Caco-2 (cell line): ENCODE measurements at regions of chr12 and their contacts with region 1.

Region 1: GRCh38 chr12:106774005-106774807 is at the start of gene RIC8B:
- DNase-seq: peak; percentile 96 to 98
- H3K4me3 ChIP-seq: peak within 1 kb of the TSS; percentile 79
- H3K4me3 Mint-ChIP-seq: peak within 1 kb of the TSS; percentile 95
- H3K27ac Mint-ChIP-seq: peak within 1 kb of the TSS; percentile 98
- H3K4me1 ChIP-seq: peaks cover 11% of the 10 kb centered on the region; the same call in 1 of the 2 replicates
- H3K4me1 Mint-ChIP-seq: peaks cover 14% of the 10 kb centered on the region
- H3K27me3 ChIP-seq: no peaks in the 10 kb centered on the region
- H3K27me3 Mint-ChIP-seq: no peaks in the 10 kb centered on the region
- CTCF ChIP-seq: peak in 1 of 2 experiments; percentile 7
- total RNA-seq, gene RIC8B: 7.8 and 7.9 TPM in 2 replicates

Region 2: DNA sequence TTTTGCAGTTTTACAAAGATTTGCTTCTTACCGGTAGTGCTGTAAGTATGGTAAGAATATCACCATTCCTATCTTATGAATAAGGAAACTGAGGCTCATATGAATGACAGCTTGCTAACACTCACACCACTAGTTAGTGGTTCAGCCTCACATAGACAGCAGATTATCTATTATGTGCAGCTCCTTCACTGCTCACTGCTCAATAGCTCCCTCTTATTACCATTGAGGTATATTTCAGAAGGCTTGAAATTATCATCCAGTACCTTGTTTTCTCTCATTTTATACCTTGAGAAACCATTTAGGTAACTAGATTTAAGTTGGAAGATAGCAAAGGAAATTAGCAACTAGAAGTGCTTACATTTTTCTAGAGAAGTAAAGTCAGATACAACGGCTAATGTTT is 15.8 kb after region 1 on chr12:
- CTCF ChIA-PET with region 1: no interaction called
- POLR2A ChIA-PET with region 1: interaction called, 3 read pairs
- intact Hi-C with region 1: loop called (anchors 2 kb)
- DNase-seq: no peak
- H3K4me3 ChIP-seq: no peak overlapping the region
- H3K4me3 Mint-ChIP-seq: no peak overlapping the region
- H3K27ac Mint-ChIP-seq: no peak overlapping the region
- H3K4me1 ChIP-seq: no peaks in the 10 kb centered on the region
- H3K4me1 Mint-ChIP-seq: peaks cover 8% of the 10 kb centered on the region
- H3K27me3 ChIP-seq: no peaks in the 10 kb centered on the region
- H3K27me3 Mint-ChIP-seq: no peaks in the 10 kb centered on the region
- CTCF ChIP-seq: peak; percentile 27 to 33